ENCODE measurements at regions of chr3 and their contacts with region 1.

Region 1: DNA sequence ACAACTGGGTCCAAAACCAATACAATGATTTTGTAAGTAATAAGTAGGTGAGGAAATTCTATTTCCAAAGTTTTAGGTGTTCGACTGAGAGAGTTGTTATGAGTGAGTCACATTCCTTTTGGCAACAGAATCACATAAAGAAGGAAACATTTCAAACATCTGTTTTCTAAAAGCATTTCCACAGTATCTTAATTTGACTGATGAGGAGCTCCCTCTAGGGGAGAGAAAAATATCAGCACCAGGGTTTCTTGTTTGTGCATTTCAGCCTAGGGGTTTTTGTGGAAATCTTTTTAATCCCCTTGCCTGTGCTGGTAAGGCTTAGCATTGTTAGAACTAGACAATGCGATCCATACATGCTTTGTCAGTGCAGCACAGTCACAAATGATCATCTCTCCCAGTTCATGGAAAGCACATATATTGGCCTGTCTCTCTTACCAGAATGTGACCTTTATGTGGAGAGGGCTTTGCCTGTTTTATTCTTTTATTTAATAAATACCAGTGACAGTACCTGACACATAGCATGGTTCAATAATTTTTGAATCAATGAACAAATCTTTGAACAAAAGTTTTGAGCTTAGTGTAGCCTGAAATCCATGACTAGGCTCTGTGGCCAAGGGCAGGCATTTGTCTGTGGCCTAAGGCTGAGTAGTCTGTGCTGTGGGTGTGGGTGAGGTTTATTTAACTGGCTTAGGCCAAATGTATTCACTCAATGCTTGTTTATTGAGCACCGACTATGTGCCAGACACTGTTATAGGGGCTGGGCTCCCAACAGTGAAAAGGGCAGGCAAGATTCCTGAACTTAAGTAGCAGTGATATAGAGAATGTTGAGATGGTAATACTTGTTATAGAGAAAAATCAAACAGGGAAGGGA is 21.1 kb upstream of the IQCF6 start:
- DNase-seq: peak; percentile 86
- ATAC-seq: peak; percentile 69
- H3K4me3 ChIP-seq: no peak overlapping the region
- H3K27ac ChIP-seq: no peak overlapping the region
- H3K4me1 ChIP-seq: peaks cover 13% of the 10 kb centered on the region
- H3K27me3 ChIP-seq: peaks cover 14% of the 10 kb centered on the region
- CTCF ChIP-seq: peak; percentile 95

Region 2: GRCh38 chr3:51718547-51719409 is 81.3 kb before region 1 on chr3:
- CTCF ChIA-PET with region 1: interaction called, 7 read pairs
- POLR2A ChIA-PET with region 1: no interaction called
- intact Hi-C with region 1: loop called (anchors 1 kb)
- DNase-seq: peak; percentile 80
- ATAC-seq: peak; percentile 81
- H3K4me3 ChIP-seq: no peak overlapping the region
- H3K27ac ChIP-seq: no peak overlapping the region
- H3K4me1 ChIP-seq: no peaks in the 10 kb centered on the region
- H3K27me3 ChIP-seq: no peaks in the 10 kb centered on the region
- CTCF ChIP-seq: peak; percentile 96

Region 3: GRCh38 chr3:51773529-51774056 is 26.5 kb before region 1 on chr3:
- CTCF ChIA-PET with region 1: no interaction called
- POLR2A ChIA-PET with region 1: no interaction called
- intact Hi-C with region 1: no loop called
- DNase-seq: peak; percentile 10
- ATAC-seq: no peak
- H3K4me3 ChIP-seq: no peak overlapping the region
- H3K27ac ChIP-seq: no peak overlapping the region
- H3K4me1 ChIP-seq: no peaks in the 10 kb centered on the region
- H3K27me3 ChIP-seq: peaks cover 48% of the 10 kb centered on the region
- CTCF ChIP-seq: no peak

Region 4: DNA sequence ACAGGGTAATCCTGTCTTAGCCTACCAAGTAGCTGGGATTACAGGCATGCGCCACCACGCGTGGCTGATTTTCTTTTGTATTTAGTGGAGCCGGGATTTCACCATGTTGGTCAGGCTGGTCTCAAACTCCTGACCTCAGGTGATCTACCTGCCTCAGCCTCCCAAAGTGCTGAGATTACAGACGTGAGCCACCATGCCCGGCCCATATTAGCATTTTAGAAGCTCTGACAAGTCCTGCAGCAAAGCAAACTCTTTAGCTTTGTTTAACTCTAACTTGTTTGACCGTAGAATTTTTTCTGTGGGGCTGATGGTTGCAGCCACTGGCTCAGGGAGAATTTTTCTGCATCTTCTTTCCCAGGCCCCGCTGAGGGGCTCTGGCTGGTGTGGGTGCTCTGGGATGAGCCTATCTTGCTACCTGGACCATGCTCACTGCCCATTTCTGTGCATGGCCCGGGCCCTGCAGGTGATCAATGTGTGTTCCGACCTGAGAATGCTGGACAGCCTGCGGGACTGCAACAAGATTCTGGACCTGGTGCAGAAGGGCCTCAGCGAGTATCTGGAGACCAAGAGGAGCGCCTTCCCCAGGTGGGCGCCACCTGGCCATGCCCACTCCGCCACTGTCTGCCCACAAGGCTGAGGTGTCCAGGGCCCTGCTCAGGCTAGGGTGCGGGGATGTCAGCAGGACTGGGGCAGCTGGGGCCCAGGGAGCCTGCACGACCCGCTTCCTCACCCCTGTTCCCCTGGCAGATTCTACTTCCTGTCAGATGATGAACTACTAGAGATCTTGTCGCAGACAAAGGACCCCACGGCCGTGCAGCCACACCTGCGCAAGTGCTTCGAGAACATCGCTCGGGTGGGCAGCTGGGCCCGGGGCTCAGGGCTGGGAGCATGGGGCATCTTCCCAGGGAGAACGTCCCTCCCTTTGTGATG is 557.3 kb after region 1 on chr3:
- CTCF ChIA-PET with region 1: no interaction called
- POLR2A ChIA-PET with region 1: no interaction called
- intact Hi-C with region 1: no loop called
- DNase-seq: no peak
- ATAC-seq: no peak
- H3K4me3 ChIP-seq: no peak overlapping the region
- H3K27ac ChIP-seq: no peak overlapping the region
- H3K4me1 ChIP-seq: no peaks in the 10 kb centered on the region
- H3K27me3 ChIP-seq: no peaks in the 10 kb centered on the region
- CTCF ChIP-seq: no peak